Transverse colon (tissue), 4 donors: ENCODE measurements at regions of chr2 and their contacts with region 1.

Region 1: DNA sequence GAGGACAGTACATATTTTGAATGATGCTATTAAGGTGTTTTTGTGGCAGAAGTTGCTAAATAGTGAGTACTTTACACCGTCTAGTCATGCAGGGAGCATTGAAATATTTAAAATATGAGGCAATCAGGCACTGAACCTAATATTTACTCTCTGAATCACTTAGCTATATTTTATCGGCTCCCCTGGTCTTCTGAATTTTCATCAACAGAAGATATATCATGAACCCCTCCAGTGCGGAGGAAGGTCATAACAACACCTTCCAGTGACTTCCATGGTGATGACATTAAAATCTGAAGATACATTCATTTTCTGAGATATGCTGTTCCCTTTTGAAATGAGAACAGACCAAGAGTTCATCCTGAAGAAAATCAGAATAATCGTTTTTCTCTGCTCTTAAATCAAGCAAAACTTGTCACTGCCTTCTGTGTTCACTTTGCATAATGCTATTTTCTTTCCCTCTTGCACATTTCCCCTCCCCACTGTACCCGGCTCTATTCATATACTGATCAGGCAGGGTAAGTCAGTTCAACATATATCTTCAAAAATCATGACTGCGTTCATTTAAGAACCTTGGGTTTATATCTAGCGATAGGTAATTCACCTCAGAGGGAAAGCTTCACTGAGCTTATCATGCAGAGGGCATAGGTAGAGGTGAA is 729.9 kb upstream of the GYPC start:
- DNase-seq: no peak
- H3K4me3 ChIP-seq: no peak overlapping the region
- H3K27ac ChIP-seq: no peak overlapping the region
- H3K4me1 ChIP-seq: no peaks in the 10 kb centered on the region
- H3K27me3 ChIP-seq: no peaks in the 10 kb centered on the region
- CTCF ChIP-seq: no peak
- EP300 ChIP-seq: no peak
- POLR2A ChIP-seq: no peak

Region 2: DNA sequence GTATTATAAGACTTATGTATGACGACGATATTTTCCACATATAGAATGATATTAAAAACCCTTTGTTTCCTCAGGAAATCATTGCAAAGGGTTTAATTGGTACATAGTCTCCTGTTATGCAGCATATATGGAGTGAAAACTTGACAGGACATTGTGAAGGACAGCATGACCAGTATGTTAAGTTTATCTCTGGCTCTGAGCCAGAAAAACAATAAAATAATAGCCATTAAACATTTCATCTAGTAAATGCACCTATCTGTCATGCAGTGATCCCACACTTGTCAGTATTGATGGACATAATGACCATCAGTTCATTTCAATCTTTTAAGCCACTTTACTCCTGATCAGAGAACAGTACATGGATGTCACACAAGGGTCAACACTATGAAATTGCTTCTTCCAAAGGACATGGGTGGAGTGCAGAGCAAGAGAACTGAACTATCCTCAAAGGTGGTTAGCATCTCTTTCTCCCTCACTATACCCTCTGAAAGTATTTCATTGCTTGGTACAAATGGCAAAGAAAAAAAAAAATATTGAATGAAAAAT is 86.1 kb before region 1 on chr2:
- in situ Hi-C with region 1: no loop called
- intact Hi-C with region 1: loop called (anchors 10 kb)
- DNase-seq: no peak
- H3K4me3 ChIP-seq: no peak overlapping the region
- H3K27ac ChIP-seq: no peak overlapping the region
- H3K4me1 ChIP-seq: peaks cover 0 to 3% (median 0%) of the 10 kb centered on the region in 4 donors
- H3K27me3 ChIP-seq: no peaks in the 10 kb centered on the region
- CTCF ChIP-seq: no peak
- EP300 ChIP-seq: no peak
- POLR2A ChIP-seq: no peak

Region 3: DNA sequence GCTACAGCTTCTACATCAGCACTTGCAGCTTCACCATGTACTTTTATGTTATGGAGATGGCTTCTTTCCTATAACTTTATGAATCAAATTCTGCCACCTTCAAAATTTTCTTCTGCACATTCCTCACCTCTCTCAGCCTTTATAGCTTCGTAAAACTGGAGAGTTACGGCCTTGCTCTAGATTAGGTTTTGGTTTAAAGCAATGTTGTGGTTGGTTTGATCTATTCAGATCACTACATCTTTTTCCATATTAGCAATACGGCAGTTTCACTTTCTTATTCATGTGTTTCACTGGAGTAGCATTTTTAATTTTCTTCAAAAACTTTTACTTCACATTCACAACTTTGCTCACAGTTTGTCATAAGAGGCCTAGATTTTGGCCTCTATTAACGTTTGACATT is 487.1 kb after region 1 on chr2:
- in situ Hi-C with region 1: no loop called
- intact Hi-C with region 1: no loop called
- DNase-seq: no peak
- H3K4me3 ChIP-seq: no peak overlapping the region
- H3K27ac ChIP-seq: no peak overlapping the region
- H3K4me1 ChIP-seq: no peaks in the 10 kb centered on the region
- H3K27me3 ChIP-seq: no peaks in the 10 kb centered on the region
- CTCF ChIP-seq: no peak
- EP300 ChIP-seq: no peak
- POLR2A ChIP-seq: no peak